HepG2 (cell line): ENCODE measurements at regions of chr3 and their contacts with region 1.

Region 1: GRCh38 chr3:111735271-111735758 is 123.8 kb upstream of the PHLDB2 start:
- DNase-seq: peak; percentile 90
- ATAC-seq: no peak
- H3K4me3 ChIP-seq: peak overlapping the region in 2 of 3 experiments; percentile 38 to 79; a peak in 3 of 6 replicates
- H3K27ac ChIP-seq: peak overlapping the region; percentile 70
- H3K4me1 ChIP-seq: peaks cover 83% of the 10 kb centered on the region
- H3K27me3 ChIP-seq: no peaks in the 10 kb centered on the region
- CTCF ChIP-seq: no peak
- EP300 ChIP-seq: peak in 1 of 2 experiments; percentile 82; a peak in 2 of 4 replicates
- POLR2A ChIP-seq: 0 out of 4 replicates have a peak, but pooled peaks of 1 of the 2 experiments have one; percentile 26
- RAD21 ChIP-seq: no peak

Region 2: DNA sequence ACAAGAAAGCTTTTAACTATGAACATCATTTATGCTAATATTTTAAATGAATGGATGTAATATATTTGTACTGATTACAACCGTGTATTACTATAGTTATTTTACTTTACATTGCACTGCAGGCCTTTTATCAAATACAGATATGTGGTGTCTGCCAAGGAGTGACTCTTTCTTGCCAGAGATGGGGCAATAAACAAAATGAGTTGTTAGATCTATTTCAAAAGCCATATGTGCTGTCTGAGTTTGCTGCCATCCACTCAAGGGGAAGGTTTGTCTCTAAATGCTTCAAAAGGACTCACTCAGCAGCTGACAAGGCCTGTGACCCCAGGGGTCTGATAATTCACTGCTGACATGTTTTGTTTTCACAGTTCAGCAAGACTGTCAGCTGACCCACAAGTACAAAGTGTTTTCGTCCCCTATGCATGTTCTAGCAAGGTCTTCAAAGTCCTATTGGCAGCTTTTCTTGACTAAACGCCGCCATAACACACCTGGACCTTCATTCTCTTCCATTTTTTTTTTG is 98.9 kb before region 1 on chr3:
- CTCF ChIA-PET with region 1: no interaction called
- POLR2A ChIA-PET with region 1: no interaction called
- in situ Hi-C with region 1: no loop called
- intact Hi-C with region 1: no loop called
- DNase-seq: no peak
- ATAC-seq: no peak
- H3K4me3 ChIP-seq: no peak overlapping the region
- H3K27ac ChIP-seq: no peak overlapping the region
- H3K4me1 ChIP-seq: no peaks in the 10 kb centered on the region
- H3K27me3 ChIP-seq: no peaks in the 10 kb centered on the region
- CTCF ChIP-seq: no peak
- EP300 ChIP-seq: no peak
- POLR2A ChIP-seq: no peak
- RAD21 ChIP-seq: no peak

Region 3: GRCh38 chr3:111764645-111765091 is 29.4 kb after region 1 on chr3:
- CTCF ChIA-PET with region 1: no interaction called
- POLR2A ChIA-PET with region 1: interaction called, 7 read pairs
- in situ Hi-C with region 1: no loop called
- intact Hi-C with region 1: loop called (anchors 1 kb)
- DNase-seq: peak; percentile 72
- ATAC-seq: peak; percentile 57
- H3K4me3 ChIP-seq: no peak overlapping the region
- H3K27ac ChIP-seq: peak overlapping the region; percentile 34
- H3K4me1 ChIP-seq: peaks cover 58% of the 10 kb centered on the region
- H3K27me3 ChIP-seq: no peaks in the 10 kb centered on the region
- CTCF ChIP-seq: peak; percentile 23; the same call in 1 of the 2 replicates
- EP300 ChIP-seq: peak in 1 of 2 experiments; percentile 69; a peak in 2 of 4 replicates
- POLR2A ChIP-seq: no peak
- RAD21 ChIP-seq: no peak

Region 4: GRCh38 chr3:111776827-111777483 is 41.6 kb after region 1 on chr3:
- CTCF ChIA-PET with region 1: no interaction called
- POLR2A ChIA-PET with region 1: no interaction called
- in situ Hi-C with region 1: no loop called
- intact Hi-C with region 1: no loop called
- DNase-seq: no peak
- ATAC-seq: no peak
- H3K4me3 ChIP-seq: no peak overlapping the region
- H3K27ac ChIP-seq: no peak overlapping the region
- H3K4me1 ChIP-seq: peaks cover 11% of the 10 kb centered on the region
- H3K27me3 ChIP-seq: no peaks in the 10 kb centered on the region
- CTCF ChIP-seq: no peak
- EP300 ChIP-seq: no peak
- POLR2A ChIP-seq: no peak
- RAD21 ChIP-seq: no peak

Region 5: GRCh38 chr3:111809196-111809595 is 73.9 kb after region 1 on chr3:
- CTCF ChIA-PET with region 1: no interaction called
- POLR2A ChIA-PET with region 1: no interaction called
- in situ Hi-C with region 1: no loop called
- intact Hi-C with region 1: loop called (anchors 2 kb)
- DNase-seq: peak; percentile 24
- ATAC-seq: peak; percentile 68
- H3K4me3 ChIP-seq: no peak overlapping the region
- H3K27ac ChIP-seq: no peak overlapping the region
- H3K4me1 ChIP-seq: peaks cover 25% of the 10 kb centered on the region
- H3K27me3 ChIP-seq: no peaks in the 10 kb centered on the region
- CTCF ChIP-seq: no peak
- EP300 ChIP-seq: no peak
- POLR2A ChIP-seq: no peak
- RAD21 ChIP-seq: no peak